MCF 10A (cell line): ENCODE measurements at regions of chr4 and their contacts with region 1.

Region 1: GRCh38 chr4:4541661-4542570 is at the start of gene STX18:
- DNase-seq: peak; percentile 88
- H3K4me3 Mint-ChIP-seq: peak within 1 kb of the TSS; percentile 98
- H3K27ac Mint-ChIP-seq: peak within 1 kb of the TSS; percentile 96
- H3K4me1 Mint-ChIP-seq: peaks cover 25% of the 10 kb centered on the region
- H3K27me3 Mint-ChIP-seq: no peaks in the 10 kb centered on the region
- CTCF ChIP-seq: no peak
- total RNA-seq, gene STX18: 32.7 and 34.3 TPM in 2 replicates

Region 2: GRCh38 chr4:4524364-4524763 is 17.6 kb before region 1 on chr4:
- CTCF ChIA-PET with region 1: interaction called, 9 read pairs
- POLR2A ChIA-PET with region 1: interaction called, 27 read pairs
- intact Hi-C with region 1: no loop called
- DNase-seq: no peak
- H3K4me3 Mint-ChIP-seq: no peak overlapping the region
- H3K27ac Mint-ChIP-seq: no peak overlapping the region
- H3K4me1 Mint-ChIP-seq: no peaks in the 10 kb centered on the region
- H3K27me3 Mint-ChIP-seq: no peaks in the 10 kb centered on the region
- CTCF ChIP-seq: no peak

Region 3: DNA sequence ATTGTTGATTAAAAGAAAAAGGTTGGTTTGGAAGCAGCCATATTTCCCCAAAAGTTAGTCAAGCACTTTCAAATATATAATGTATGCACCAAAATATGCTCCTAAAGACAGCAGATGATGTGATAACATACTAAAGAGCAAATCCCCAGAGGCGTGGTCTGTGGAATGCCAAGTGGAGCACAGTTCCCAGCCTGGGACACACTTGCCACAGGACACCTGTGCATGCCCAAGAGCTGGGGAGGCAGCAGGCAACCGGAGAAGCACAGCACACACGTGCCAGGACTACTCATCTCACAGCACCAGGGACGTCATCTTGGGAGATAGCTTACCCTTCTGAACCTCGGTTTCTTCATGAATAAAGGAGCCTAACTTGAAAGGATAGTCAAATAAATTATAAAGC is 12.5 kb before region 1 on chr4:
- CTCF ChIA-PET with region 1: interaction called, 3 read pairs
- POLR2A ChIA-PET with region 1: interaction called, 11 read pairs
- intact Hi-C with region 1: no loop called
- DNase-seq: no peak
- H3K4me3 Mint-ChIP-seq: no peak overlapping the region
- H3K27ac Mint-ChIP-seq: no peak overlapping the region
- H3K4me1 Mint-ChIP-seq: no peaks in the 10 kb centered on the region
- H3K27me3 Mint-ChIP-seq: no peaks in the 10 kb centered on the region
- CTCF ChIP-seq: no peak

Region 4: DNA sequence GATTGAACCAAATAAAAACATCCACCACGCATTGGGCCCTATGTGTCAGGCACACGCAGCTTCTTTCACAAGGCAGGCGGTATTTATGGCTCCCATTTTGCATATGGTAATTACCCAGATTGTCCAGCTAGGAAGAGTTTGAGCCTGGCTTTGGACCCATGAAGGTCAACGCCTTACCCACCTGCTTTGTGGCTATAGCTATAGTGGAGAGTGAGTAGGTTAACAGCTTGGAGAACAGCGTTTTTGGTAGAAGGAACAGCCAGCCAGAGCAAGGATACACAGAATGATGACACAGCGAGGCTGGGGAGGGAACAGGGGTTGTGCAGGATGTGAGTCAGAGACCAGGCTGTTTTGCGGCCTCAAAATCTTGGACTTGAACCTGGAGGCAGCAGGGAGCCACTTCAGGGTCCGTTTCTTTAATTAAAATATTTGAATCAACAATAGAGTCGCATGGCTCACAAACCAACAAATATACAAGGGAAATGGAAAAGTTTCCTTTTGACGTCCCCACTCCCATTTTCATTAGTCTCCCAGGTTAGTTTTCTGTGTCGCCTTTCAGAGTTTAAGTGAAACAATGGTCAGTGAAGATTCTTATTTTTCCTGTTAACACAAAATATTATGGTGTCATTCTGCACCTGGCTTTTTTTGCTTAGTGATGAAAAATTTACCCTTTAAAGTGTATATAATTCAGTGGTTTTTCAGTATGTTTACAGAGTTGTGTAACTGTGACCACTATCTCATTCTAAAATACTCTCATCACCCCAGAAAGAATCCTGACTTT is 118.1 kb after region 1 on chr4:
- CTCF ChIA-PET with region 1: no interaction called
- POLR2A ChIA-PET with region 1: interaction called, 6 read pairs
- intact Hi-C with region 1: loop called (anchors 2 kb)
- DNase-seq: peak; percentile 92
- H3K4me3 Mint-ChIP-seq: peak overlapping the region; percentile 33
- H3K27ac Mint-ChIP-seq: peak overlapping the region; percentile 93
- H3K4me1 Mint-ChIP-seq: peaks cover 18% of the 10 kb centered on the region
- H3K27me3 Mint-ChIP-seq: no peaks in the 10 kb centered on the region
- CTCF ChIP-seq: no peak

Region 5: DNA sequence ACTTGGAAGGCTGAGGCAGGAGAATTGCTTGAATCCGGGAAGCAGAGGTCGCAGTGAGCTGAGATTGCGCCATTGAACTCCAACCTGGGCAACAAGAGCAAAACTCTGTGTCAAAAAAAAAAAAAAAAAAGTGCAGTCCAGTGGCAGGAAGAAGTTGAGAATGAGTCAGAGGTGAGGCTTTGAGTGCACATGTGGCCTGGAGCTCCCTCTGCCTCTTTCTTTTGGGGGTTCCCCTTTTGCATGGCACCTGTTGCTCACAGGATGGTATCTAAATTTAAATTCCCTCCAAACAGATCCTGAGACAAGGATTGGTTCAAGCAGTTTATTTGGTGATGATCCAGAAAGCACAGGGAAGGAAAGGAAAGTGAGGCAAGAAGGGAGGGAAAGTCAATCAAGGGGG is 151.3 kb after region 1 on chr4:
- CTCF ChIA-PET with region 1: interaction called, 3 read pairs
- POLR2A ChIA-PET with region 1: no interaction called
- intact Hi-C with region 1: loop called (anchors 2 kb)
- DNase-seq: peak; percentile 81
- H3K4me3 Mint-ChIP-seq: no peak overlapping the region
- H3K27ac Mint-ChIP-seq: no peak overlapping the region
- H3K4me1 Mint-ChIP-seq: peaks cover 10% of the 10 kb centered on the region
- H3K27me3 Mint-ChIP-seq: no peaks in the 10 kb centered on the region
- CTCF ChIP-seq: peak; percentile 17

Region 6: GRCh38 chr4:4859390-4859842 is 317.5 kb after region 1 on chr4 and contains the start of gene MSX1:
- CTCF ChIA-PET with region 1: interaction called, 3 read pairs
- POLR2A ChIA-PET with region 1: interaction called, 15 read pairs
- intact Hi-C with region 1: no loop called
- DNase-seq: peak; percentile 86
- H3K4me3 Mint-ChIP-seq: peak within 1 kb of the TSS; percentile 79
- H3K27ac Mint-ChIP-seq: peak within 1 kb of the TSS; percentile 94
- H3K4me1 Mint-ChIP-seq: no peaks in the 10 kb centered on the region
- H3K27me3 Mint-ChIP-seq: peaks cover 15% of the 10 kb centered on the region
- CTCF ChIP-seq: no peak
- total RNA-seq, gene MSX1: 3.6 and 3.9 TPM in 2 replicates